BJ (cell line): ENCODE measurements at regions of chr3 and their contacts with region 1.

Region 1: DNA sequence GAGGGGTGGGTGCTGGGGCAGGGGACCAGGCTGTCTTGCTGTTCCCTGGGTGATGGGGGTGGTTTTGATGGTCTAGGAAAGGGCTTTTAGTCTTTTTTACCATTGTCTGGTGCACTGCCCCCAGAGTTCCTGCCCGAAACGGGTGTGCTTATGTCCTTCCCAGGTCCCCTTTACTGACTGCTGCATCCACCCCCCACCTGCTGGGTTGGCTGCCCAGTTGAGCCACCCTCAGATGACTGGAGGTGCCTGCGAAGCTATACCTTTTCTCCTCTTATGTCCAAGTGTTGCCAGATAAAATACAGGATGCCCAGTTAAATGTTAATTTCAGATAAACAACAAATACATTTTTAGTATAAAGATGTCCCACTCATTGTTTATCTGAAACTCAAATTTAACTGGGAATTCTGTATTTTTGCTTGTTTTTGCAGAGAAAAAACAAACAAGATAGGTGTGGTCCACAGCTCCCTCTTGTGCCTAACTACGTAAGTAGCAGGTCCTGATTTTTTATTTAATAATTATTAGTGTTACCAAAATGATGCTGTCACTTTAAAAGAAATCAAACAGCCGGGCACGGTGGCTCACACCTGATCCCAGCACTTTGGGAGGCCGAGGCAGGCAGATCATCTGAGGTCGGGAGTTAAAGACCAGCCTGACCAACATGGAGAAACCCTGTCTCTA is 6.1 kb upstream of the RPP14 start:
- DNase-seq: no peak
- H3K4me3 ChIP-seq: no peak overlapping the region
- H3K27me3 ChIP-seq: peaks cover 5% of the 10 kb centered on the region
- CTCF ChIP-seq: peak; percentile 55

Region 2: DNA sequence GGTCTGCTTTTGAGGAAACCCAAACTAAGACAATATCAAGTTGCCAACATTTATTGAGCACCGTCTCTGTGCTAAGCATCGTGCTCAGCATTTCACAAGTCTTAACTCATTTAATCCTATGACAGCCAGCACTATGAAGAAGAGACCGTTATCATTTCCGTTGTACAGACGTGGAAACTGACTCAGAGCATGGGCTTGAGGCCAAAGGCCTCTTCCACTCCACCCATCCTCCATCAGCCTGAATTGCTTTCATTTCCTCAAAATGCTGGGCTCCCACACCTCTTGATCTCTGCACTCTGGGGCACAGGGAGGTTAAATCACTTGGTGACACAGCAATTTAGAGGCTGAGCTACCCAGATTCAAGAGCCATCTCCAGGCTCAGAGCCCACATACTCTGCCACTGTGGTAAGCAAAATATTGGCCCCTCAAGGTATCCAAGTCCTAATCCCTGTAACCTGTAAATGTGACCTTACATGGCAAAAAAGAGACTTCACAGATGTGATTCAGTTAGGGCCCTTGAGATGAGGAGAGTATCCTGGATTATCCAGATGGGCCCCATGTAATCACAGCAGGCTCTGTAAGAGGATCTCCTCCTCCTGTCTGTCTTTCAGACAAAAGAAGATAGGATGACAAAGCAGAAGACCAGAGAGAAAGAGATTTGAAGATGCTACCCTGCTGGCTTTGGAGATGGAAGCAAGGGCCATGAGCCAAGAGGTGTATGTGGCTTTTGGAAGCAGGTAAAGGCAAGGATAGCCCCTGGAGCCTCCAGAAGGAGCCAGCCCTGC is 316.1 kb before region 1 on chr3:
- CTCF ChIA-PET with region 1: no interaction called
- POLR2A ChIA-PET with region 1: interaction called, 19 read pairs
- DNase-seq: peak; percentile 74
- H3K4me3 ChIP-seq: no peak overlapping the region
- H3K27me3 ChIP-seq: no peaks in the 10 kb centered on the region
- CTCF ChIP-seq: no peak

Region 3: DNA sequence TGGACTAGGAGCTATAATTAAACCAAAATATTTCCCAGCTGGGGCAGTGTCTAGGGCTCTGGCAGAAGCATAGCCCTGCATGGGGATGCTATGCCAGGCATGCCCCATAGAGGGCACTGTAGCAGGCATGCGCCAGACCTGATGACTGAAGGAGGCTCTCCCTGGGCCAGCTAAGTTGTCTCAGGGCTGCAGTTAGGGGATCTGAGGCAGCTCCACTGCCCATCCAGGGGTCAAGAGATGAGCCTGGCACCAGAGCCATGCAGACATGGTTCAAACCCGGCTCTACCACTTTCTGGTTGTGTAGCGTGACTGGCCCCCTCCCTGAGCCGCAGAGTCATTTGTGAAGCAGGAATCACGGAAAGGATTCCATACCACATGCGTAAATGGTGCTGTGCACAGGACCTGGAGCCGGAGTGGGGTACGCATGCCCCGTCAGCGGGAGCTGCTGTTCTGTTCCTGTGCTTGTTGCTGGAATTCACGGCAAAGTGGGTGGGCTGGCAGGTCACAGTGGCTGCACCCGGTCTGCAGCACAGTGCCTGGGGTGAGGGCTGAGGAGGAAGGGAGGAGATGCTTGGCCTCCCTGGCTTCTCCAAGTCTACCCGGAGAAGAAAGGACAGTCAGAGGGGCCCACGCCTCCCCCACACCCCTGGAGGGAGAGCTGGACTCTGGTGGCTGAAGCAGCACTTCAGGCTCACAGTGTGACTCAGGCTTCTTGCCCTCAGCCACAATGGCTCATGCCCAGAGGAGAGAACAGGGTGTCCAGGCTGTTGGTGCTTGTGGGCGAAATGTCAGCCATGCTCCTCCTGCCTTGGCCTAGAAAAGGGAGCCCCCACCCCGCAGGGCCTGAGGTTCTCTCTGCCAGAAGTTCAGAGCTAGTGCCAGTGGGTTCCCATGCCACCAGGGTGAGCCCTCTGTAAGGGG is 132.3 kb before region 1 on chr3:
- CTCF ChIA-PET with region 1: interaction called, 11 read pairs
- POLR2A ChIA-PET with region 1: no interaction called
- DNase-seq: no peak
- H3K4me3 ChIP-seq: no peak overlapping the region
- H3K27me3 ChIP-seq: no peaks in the 10 kb centered on the region
- CTCF ChIP-seq: peak; percentile 97